ENCODE measurements at regions of chr2 and their contacts with region 1.

Region 1: DNA sequence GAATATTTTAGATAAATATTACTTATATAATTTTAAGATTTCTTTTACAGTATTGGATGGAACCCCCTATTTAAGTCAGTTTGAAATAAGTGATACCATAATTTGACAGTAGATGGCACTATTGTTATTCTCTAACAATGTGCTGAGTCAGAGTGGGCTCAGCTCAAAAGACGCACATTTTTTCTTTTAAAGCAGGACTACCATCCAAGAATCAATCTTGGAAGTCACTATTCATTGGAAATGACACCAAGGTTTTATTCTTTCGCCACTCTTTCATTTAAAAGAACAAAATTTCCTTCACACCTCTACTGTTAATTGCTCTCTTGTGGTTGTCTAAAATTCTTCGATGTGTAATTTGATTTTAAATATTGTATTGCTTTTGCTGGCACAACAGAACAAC is 32.6 kb upstream of the SPAG16 start:
- DNase-seq: peak; percentile 93
- ATAC-seq: peak; percentile 65
- H3K4me3 ChIP-seq: peak overlapping the region; percentile 41; the same call in 1 of the 2 replicates
- H3K27ac ChIP-seq: no peak overlapping the region
- H3K4me1 ChIP-seq: peaks cover 18% of the 10 kb centered on the region
- H3K27me3 ChIP-seq: no peaks in the 10 kb centered on the region
- CTCF ChIP-seq: peak; percentile 65

Region 2: GRCh38 chr2:212686285-212686895 is 565.2 kb before region 1 on chr2:
- CTCF ChIA-PET with region 1: no interaction called
- POLR2A ChIA-PET with region 1: no interaction called
- intact Hi-C with region 1: loop called (anchors 1 kb)
- DNase-seq: peak; percentile 77
- ATAC-seq: peak; percentile 59
- H3K4me3 ChIP-seq: no peak overlapping the region
- H3K27ac ChIP-seq: no peak overlapping the region
- H3K4me1 ChIP-seq: peaks cover 9% of the 10 kb centered on the region; the same call in 1 of the 2 replicates
- H3K27me3 ChIP-seq: no peaks in the 10 kb centered on the region
- CTCF ChIP-seq: peak; percentile 92

Region 3: GRCh38 chr2:213125646-213126347 is 125.8 kb before region 1 on chr2:
- CTCF ChIA-PET with region 1: no interaction called
- POLR2A ChIA-PET with region 1: no interaction called
- intact Hi-C with region 1: no loop called
- DNase-seq: peak; percentile 54
- ATAC-seq: peak; percentile 72
- H3K4me3 ChIP-seq: no peak overlapping the region
- H3K27ac ChIP-seq: no peak overlapping the region
- H3K4me1 ChIP-seq: peaks cover 20% of the 10 kb centered on the region
- H3K27me3 ChIP-seq: no peaks in the 10 kb centered on the region
- CTCF ChIP-seq: peak; percentile 44

Region 4: GRCh38 chr2:213306316-213306942 is 54.8 kb after region 1 on chr2:
- CTCF ChIA-PET with region 1: no interaction called
- POLR2A ChIA-PET with region 1: no interaction called
- intact Hi-C with region 1: no loop called
- DNase-seq: no peak
- ATAC-seq: no peak
- H3K4me3 ChIP-seq: no peak overlapping the region
- H3K27ac ChIP-seq: no peak overlapping the region
- H3K4me1 ChIP-seq: no peaks in the 10 kb centered on the region
- H3K27me3 ChIP-seq: no peaks in the 10 kb centered on the region
- CTCF ChIP-seq: no peak

Region 5: GRCh38 chr2:213475433-213475832 is 223.8 kb after region 1 on chr2:
- CTCF ChIA-PET with region 1: no interaction called
- POLR2A ChIA-PET with region 1: no interaction called
- intact Hi-C with region 1: loop called (anchors 5 kb)
- DNase-seq: no peak
- ATAC-seq: no peak
- H3K4me3 ChIP-seq: no peak overlapping the region
- H3K27ac ChIP-seq: no peak overlapping the region
- H3K4me1 ChIP-seq: no peaks in the 10 kb centered on the region
- H3K27me3 ChIP-seq: no peaks in the 10 kb centered on the region
- CTCF ChIP-seq: no peak

Region 6: GRCh38 chr2:213559053-213559452 is 307.4 kb after region 1 on chr2:
- CTCF ChIA-PET with region 1: no interaction called
- POLR2A ChIA-PET with region 1: no interaction called
- intact Hi-C with region 1: no loop called
- DNase-seq: no peak
- ATAC-seq: no peak
- H3K4me3 ChIP-seq: no peak overlapping the region
- H3K27ac ChIP-seq: no peak overlapping the region
- H3K4me1 ChIP-seq: no peaks in the 10 kb centered on the region; the same call in 1 of the 2 replicates
- H3K27me3 ChIP-seq: no peaks in the 10 kb centered on the region
- CTCF ChIP-seq: no peak

Region 7: DNA sequence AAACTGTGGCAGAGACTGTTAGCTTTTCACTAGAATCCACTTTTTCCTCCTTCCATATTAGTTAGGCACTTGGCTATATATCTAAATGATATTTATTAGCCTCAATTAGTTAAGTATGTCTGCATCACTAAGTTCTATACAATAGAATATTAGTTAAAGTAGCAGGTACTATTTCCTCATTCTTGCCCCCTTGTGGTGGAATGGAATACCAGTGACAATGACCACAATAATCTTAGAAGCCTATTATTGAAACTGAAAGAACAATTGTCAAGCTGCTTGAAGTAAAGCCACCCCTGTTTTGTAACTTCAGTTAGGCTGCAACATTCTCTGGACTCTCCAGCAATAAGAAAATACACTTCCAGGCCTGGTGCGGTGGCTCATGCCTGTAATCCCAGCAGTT is 682.9 kb after region 1 on chr2:
- CTCF ChIA-PET with region 1: no interaction called
- POLR2A ChIA-PET with region 1: no interaction called
- intact Hi-C with region 1: loop called (anchors 1 kb)
- DNase-seq: peak; percentile 62
- ATAC-seq: peak; percentile 31; the same call in 1 of the 2 replicates
- H3K4me3 ChIP-seq: no peak overlapping the region
- H3K27ac ChIP-seq: no peak overlapping the region
- H3K4me1 ChIP-seq: peaks cover 12% of the 10 kb centered on the region
- H3K27me3 ChIP-seq: no peaks in the 10 kb centered on the region
- CTCF ChIP-seq: peak; percentile 68

Region 8: DNA sequence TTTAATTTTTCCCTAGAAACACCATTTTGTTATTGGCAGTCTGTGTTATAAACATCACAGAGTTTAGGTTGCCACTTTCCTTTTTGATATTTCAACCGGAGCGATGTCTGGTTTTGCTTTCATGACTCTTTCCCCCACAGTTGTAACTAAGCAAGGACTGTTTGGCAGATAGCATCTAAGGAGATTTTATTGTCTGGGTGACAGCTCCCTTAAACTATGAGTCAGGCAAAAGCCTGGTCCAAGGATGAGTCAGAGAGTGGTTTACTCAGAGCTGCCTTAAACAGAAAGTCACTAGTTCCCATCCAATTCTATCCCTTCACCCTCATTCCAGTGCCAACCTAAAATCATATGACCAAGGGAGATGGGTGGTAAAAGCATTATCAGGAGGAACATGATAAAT is 817.6 kb after region 1 on chr2:
- CTCF ChIA-PET with region 1: no interaction called
- POLR2A ChIA-PET with region 1: no interaction called
- intact Hi-C with region 1: loop called (anchors 5 kb)
- DNase-seq: peak; percentile 97
- ATAC-seq: peak; percentile 93
- H3K4me3 ChIP-seq: peak overlapping the region; percentile 53
- H3K27ac ChIP-seq: peak overlapping the region; percentile 88
- H3K4me1 ChIP-seq: peaks cover 49% of the 10 kb centered on the region
- H3K27me3 ChIP-seq: no peaks in the 10 kb centered on the region
- CTCF ChIP-seq: no peak

Region 9: DNA sequence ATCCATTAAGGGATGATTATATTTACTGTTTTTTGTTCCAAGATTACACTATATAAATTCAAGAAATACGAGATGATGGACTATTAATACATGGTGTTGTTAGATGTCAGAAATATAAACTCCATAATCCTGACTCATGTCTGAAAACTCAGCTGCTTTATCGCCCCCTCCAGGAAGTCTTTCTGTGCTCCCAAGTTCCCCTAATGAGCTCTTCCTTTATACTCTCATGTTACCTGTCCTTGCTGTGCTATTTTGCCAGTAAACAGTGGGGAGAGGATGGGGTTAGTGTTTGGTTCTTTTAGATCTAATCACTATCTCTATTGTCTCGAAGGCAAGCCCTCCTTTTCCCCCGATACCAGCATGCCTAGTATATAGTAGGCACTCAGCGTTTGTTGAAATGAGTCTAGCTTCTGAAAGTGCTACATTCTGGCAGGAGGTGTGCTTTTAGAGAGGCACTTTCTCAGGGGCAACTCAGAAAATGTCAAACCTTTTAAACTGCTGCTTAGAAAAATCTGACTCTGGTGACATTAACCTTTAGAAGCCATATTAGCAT is 1579.3 kb after region 1 on chr2:
- CTCF ChIA-PET with region 1: no interaction called
- POLR2A ChIA-PET with region 1: no interaction called
- intact Hi-C with region 1: loop called (anchors 10 kb)
- DNase-seq: peak; percentile 52
- ATAC-seq: peak; percentile 65
- H3K4me3 ChIP-seq: no peak overlapping the region
- H3K27ac ChIP-seq: no peak overlapping the region
- H3K4me1 ChIP-seq: no peaks in the 10 kb centered on the region
- H3K27me3 ChIP-seq: no peaks in the 10 kb centered on the region
- CTCF ChIP-seq: peak; percentile 65

Measured in PC-3 (cell line).